OCI-LY7 (cell line): ENCODE measurements at regions of chr7 and their contacts with region 1.

Region 1: DNA sequence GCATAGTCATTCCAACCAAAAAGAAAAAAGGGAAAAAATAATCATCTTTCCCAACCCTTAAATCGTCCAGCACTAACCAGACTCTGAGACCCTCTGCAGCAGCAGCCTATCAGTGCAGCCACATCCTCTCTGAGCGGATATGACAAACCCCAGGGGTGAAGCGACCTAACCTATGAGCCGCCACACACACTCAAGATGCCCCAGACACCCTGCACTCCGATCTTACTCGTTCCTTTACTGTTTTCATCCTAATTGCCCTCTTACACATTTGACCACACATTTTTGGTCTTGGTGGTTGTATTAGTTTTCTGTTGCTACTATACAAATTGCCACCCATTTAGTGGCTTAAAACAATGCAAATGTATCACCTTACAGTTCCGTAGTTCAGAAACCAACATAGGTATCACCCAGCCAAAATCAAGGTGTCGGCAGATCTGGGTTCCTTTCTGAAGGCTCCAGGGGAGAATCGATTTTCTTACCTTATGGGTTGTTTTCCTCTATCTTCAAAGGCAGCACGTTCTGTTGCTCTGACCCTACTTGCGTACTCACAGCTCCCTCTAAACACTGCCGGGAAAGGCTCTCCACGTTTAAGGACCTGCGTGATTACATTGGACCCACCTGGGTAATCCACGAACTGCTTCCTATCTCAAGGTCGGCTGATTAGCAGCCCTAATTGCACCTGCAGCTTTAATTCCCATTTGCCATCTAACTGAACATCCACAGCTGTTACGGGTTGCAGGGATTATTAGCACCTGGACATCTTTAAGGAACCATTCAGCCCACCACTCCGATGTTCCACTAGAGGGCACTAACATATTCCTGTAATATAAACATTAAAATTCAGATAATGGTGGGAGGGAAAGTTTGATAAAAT is 37.3 kb upstream of the PRSS1 start:
- DNase-seq: peak; percentile 74
- H3K4me3 ChIP-seq: peak overlapping the region; percentile 58
- H3K27ac ChIP-seq: no peak overlapping the region
- H3K4me1 ChIP-seq: peaks cover 46% of the 10 kb centered on the region
- CTCF ChIP-seq: peak; percentile 98

Region 2: DNA sequence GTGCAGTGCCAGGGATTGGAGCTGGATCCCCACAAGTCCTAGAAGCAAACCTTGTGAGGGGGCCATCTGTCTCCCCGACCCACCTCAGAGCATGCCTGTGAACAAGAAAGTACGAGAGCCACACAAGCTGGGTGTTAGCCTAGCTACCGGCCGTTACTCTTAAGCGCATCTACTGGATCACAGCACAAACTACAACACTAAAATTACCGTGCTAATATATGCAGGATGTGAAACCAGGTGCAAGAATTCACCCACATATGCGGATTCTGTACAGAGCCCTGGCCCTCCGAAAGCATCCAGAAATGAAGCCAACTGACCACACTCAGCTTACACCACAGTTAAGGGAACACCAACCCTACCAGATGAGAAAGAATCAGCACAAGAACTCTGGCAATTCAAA is 21.3 kb after region 1 on chr7:
- CTCF ChIA-PET with region 1: interaction called, 3 read pairs
- POLR2A ChIA-PET with region 1: interaction called, 27 read pairs
- intact Hi-C with region 1: no loop called
- DNase-seq: peak; percentile 33
- H3K4me3 ChIP-seq: no peak overlapping the region
- H3K27ac ChIP-seq: no peak overlapping the region
- H3K4me1 ChIP-seq: peaks cover 11% of the 10 kb centered on the region
- CTCF ChIP-seq: no peak

Region 3: GRCh38 chr7:142745091-142745635 is 33.2 kb after region 1 on chr7:
- CTCF ChIA-PET with region 1: no interaction called
- POLR2A ChIA-PET with region 1: no interaction called
- intact Hi-C with region 1: no loop called
- DNase-seq: no peak
- H3K4me3 ChIP-seq: no peak overlapping the region
- H3K27ac ChIP-seq: no peak overlapping the region
- H3K4me1 ChIP-seq: peaks cover 13% of the 10 kb centered on the region
- CTCF ChIP-seq: no peak

Region 4: GRCh38 chr7:142898377-142899170 is 186.6 kb after region 1 on chr7:
- CTCF ChIA-PET with region 1: no interaction called
- POLR2A ChIA-PET with region 1: no interaction called
- intact Hi-C with region 1: no loop called
- DNase-seq: no peak
- H3K4me3 ChIP-seq: no peak overlapping the region
- H3K27ac ChIP-seq: no peak overlapping the region
- H3K4me1 ChIP-seq: no peaks in the 10 kb centered on the region
- CTCF ChIP-seq: no peak

Region 5: GRCh38 chr7:143131781-143132180 is 419.8 kb after region 1 on chr7 and contains the start of gene PIP:
- CTCF ChIA-PET with region 1: no interaction called
- POLR2A ChIA-PET with region 1: no interaction called
- intact Hi-C with region 1: no loop called
- DNase-seq: no peak
- H3K4me3 ChIP-seq: no peak within 1 kb of the TSS
- H3K27ac ChIP-seq: no peak within 1 kb of the TSS
- H3K4me1 ChIP-seq: no peaks in the 10 kb centered on the region
- CTCF ChIP-seq: no peak
- total RNA-seq, gene PIP: not detected in 2 replicates